Activated naive CD4-positive, alpha-beta T cell treated with anti-CD3 and anti-CD28 coated beads for 36 hours (primary cell): ENCODE measurements at regions of chr18 and their contacts with region 1.

Region 1: GRCh38 chr18:77054606-77055428 is 77.8 kb downstream of the MBP start:
- DNase-seq: peak; percentile 93
- H3K4me3 Mint-ChIP-seq: peak overlapping the region; percentile 78
- H3K27ac Mint-ChIP-seq: peak overlapping the region; percentile 93
- H3K4me1 Mint-ChIP-seq: peaks cover 49% of the 10 kb centered on the region
- H3K27me3 Mint-ChIP-seq: no peaks in the 10 kb centered on the region

Region 2: GRCh38 chr18:76859474-76860339 is 195.1 kb before region 1 on chr18:
- CTCF ChIA-PET with region 1: no interaction called
- intact Hi-C with region 1: loop called (anchors 2 kb)
- DNase-seq: peak; percentile 66
- H3K4me3 Mint-ChIP-seq: no peak overlapping the region
- H3K27ac Mint-ChIP-seq: peak overlapping the region; percentile 54
- H3K4me1 Mint-ChIP-seq: peaks cover 22% of the 10 kb centered on the region
- H3K27me3 Mint-ChIP-seq: no peaks in the 10 kb centered on the region

Region 3: DNA sequence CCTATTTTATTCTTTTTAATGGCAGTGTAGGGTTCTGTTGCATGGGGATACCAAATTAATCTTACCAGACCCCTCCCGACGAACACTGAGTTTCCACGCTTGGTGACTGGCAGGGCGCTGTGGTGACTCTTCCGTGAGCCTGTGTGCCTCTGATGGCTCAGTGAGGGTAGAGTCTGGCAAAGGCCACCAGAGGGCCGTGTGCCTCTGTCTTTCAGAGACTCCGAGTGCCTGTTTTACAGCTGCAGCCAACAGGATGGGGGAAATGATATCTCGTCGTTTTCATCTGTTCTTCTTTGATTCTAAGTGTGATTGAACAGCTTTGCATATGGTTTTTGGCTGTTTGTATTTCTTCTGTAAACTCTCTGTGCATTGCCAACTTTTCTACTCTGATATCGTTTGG is 132.7 kb before region 1 on chr18:
- CTCF ChIA-PET with region 1: no interaction called
- intact Hi-C with region 1: loop called (anchors 1 kb)
- DNase-seq: peak; percentile 64
- H3K4me3 Mint-ChIP-seq: no peak overlapping the region
- H3K27ac Mint-ChIP-seq: no peak overlapping the region
- H3K4me1 Mint-ChIP-seq: peaks cover 11% of the 10 kb centered on the region
- H3K27me3 Mint-ChIP-seq: no peaks in the 10 kb centered on the region

Region 4: GRCh38 chr18:77067291-77068061 is 12.7 kb after region 1 on chr18:
- CTCF ChIA-PET with region 1: interaction called, 4 read pairs
- intact Hi-C with region 1: loop called (anchors 1 kb)
- DNase-seq: peak; percentile 77
- H3K4me3 Mint-ChIP-seq: peak overlapping the region; percentile 17
- H3K27ac Mint-ChIP-seq: peak overlapping the region; percentile 92
- H3K4me1 Mint-ChIP-seq: peaks cover 99% of the 10 kb centered on the region
- H3K27me3 Mint-ChIP-seq: no peaks in the 10 kb centered on the region

Region 5: GRCh38 chr18:77304268-77304667 is 249.5 kb after region 1 on chr18:
- CTCF ChIA-PET with region 1: no interaction called
- intact Hi-C with region 1: no loop called
- DNase-seq: no peak
- H3K4me3 Mint-ChIP-seq: no peak overlapping the region
- H3K27ac Mint-ChIP-seq: no peak overlapping the region
- H3K4me1 Mint-ChIP-seq: no peaks in the 10 kb centered on the region
- H3K27me3 Mint-ChIP-seq: peaks cover 2% of the 10 kb centered on the region